Activated CD8-positive, alpha-beta T cell treated with anti-CD3 and anti-CD28 coated beads for 36 hours (primary cell): ENCODE measurements at regions of chr11 and their contacts with region 1.

Region 1: GRCh38 chr11:102317099-102317767 is at the start of gene BIRC3:
- DNase-seq: peak; percentile 98
- ATAC-seq: peak; percentile 87
- H3K4me3 Mint-ChIP-seq: peak within 1 kb of the TSS; percentile 100
- H3K27ac Mint-ChIP-seq: peak within 1 kb of the TSS; percentile 99
- H3K4me1 Mint-ChIP-seq: peaks cover 62% of the 10 kb centered on the region
- H3K27me3 Mint-ChIP-seq: no peaks in the 10 kb centered on the region
- CTCF ChIP-seq: no peak
- total RNA-seq, gene BIRC3: 102 to 108 TPM

Region 2: DNA sequence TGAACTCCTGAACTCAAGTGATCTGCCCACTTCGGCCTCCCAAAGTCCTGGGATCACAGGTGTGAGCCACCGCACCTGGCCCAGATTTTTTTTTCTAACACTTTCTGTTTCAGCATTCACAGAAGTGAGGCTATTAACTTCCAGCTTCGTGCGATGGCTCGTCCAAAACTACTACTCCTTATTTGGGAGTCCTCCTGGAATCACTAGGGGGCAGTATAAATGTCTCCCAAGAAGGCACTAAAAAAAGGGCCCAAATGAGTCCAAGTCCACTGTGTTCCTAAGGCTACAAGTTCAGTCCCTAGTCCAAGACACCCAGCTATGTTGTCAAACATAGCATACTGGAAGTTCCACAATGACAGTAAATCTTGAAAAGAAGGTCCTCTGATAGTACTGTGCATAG is 63.2 kb before region 1 on chr11:
- CTCF ChIA-PET with region 1: no interaction called
- POLR2A ChIA-PET with region 1: no interaction called
- intact Hi-C with region 1: no loop called
- DNase-seq: no peak
- ATAC-seq: no peak
- H3K4me3 Mint-ChIP-seq: no peak overlapping the region
- H3K27ac Mint-ChIP-seq: no peak overlapping the region
- H3K4me1 Mint-ChIP-seq: no peaks in the 10 kb centered on the region
- H3K27me3 Mint-ChIP-seq: no peaks in the 10 kb centered on the region
- CTCF ChIP-seq: peak; percentile 52

Region 3: DNA sequence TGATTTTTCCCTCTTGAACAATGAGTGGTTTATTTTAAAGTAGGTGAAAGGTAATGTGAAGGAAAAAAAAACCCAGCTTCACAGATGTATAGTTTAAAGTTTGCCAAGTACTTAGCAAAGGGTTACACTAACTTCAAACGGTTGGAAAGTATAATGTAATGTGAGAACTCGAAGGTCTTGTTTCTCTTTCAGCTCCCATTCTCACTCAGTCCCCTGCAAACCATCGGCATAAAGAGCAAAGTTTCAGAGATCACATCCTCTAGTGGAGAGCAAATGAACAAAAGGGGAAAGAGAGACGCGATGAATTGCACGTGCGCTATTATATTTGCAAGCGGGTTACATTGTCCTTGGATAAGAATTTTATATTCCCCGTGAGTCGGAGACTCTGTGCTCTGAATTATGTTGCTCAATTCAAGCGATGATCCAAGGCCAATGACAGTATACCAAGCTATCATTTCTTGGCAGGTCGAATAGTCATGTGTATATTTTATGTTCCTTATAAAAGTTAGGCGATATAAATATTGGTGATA is 37.5 kb before region 1 on chr11:
- CTCF ChIA-PET with region 1: interaction called, 10 read pairs
- POLR2A ChIA-PET with region 1: interaction called, 3 read pairs
- intact Hi-C with region 1: no loop called
- DNase-seq: peak; percentile 45
- ATAC-seq: peak; percentile 93
- H3K4me3 Mint-ChIP-seq: peak overlapping the region; percentile 8
- H3K27ac Mint-ChIP-seq: no peak overlapping the region
- H3K4me1 Mint-ChIP-seq: peaks cover 13% of the 10 kb centered on the region
- H3K27me3 Mint-ChIP-seq: peaks cover 6% of the 10 kb centered on the region
- CTCF ChIP-seq: peak; percentile 12

Region 4: GRCh38 chr11:102306048-102306585 is 11.1 kb before region 1 on chr11:
- CTCF ChIA-PET with region 1: interaction called, 23 read pairs
- POLR2A ChIA-PET with region 1: interaction called, 7 read pairs
- intact Hi-C with region 1: no loop called
- DNase-seq: peak; percentile 38
- ATAC-seq: peak; percentile 40
- H3K4me3 Mint-ChIP-seq: peak overlapping the region; percentile 51
- H3K27ac Mint-ChIP-seq: peak overlapping the region; percentile 81
- H3K4me1 Mint-ChIP-seq: peaks cover 55% of the 10 kb centered on the region
- H3K27me3 Mint-ChIP-seq: no peaks in the 10 kb centered on the region
- CTCF ChIP-seq: peak; percentile 22

Region 5: DNA sequence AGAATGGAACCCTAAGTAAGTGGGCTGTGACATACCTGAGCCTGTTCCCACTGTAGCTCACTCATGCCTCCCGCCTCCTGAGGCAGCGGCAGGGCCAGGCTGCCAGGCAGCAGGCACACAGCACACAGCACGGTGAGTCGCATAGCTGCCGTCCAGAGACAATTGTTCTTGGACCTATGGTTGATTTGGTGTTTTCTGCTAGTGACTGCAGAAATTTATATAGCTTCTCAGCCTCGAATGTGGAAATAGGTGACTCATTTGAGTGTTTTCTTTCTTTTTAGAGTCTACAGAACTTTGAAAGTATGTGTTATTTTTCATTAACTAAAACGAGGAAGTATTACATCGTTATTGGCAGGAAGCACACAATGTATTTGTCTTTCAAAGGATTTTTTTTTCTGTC is 213.3 kb after region 1 on chr11 and contains the start of gene MMP7:
- CTCF ChIA-PET with region 1: no interaction called
- POLR2A ChIA-PET with region 1: no interaction called
- intact Hi-C with region 1: no loop called
- DNase-seq: no peak
- ATAC-seq: no peak
- H3K4me3 Mint-ChIP-seq: no peak within 1 kb of the TSS
- H3K27ac Mint-ChIP-seq: no peak within 1 kb of the TSS
- H3K4me1 Mint-ChIP-seq: peaks cover 6% of the 10 kb centered on the region
- H3K27me3 Mint-ChIP-seq: peaks cover 3% of the 10 kb centered on the region
- CTCF ChIP-seq: no peak
- total RNA-seq, gene MMP7: not detected